ENCODE measurements at regions of chr2 and their contacts with region 1.

Region 1: GRCh38 chr2:37168217-37168981 is 11.6 kb upstream of the EIF2AK2 start:
- DNase-seq: peak; percentile 55
- ATAC-seq: peak; percentile 97
- H3K4me3 ChIP-seq: no peak overlapping the region
- H3K27ac ChIP-seq: no peak overlapping the region
- H3K4me1 ChIP-seq: 0 out of 2 replicates have a peak, but pooled peaks cover 2% of the 10 kb centered on the region
- H3K27me3 ChIP-seq: no peaks in the 10 kb centered on the region
- CTCF ChIP-seq: peak; percentile 70
- POLR2A ChIP-seq: no peak
- RAD21 ChIP-seq: peak; percentile 73

Region 2: DNA sequence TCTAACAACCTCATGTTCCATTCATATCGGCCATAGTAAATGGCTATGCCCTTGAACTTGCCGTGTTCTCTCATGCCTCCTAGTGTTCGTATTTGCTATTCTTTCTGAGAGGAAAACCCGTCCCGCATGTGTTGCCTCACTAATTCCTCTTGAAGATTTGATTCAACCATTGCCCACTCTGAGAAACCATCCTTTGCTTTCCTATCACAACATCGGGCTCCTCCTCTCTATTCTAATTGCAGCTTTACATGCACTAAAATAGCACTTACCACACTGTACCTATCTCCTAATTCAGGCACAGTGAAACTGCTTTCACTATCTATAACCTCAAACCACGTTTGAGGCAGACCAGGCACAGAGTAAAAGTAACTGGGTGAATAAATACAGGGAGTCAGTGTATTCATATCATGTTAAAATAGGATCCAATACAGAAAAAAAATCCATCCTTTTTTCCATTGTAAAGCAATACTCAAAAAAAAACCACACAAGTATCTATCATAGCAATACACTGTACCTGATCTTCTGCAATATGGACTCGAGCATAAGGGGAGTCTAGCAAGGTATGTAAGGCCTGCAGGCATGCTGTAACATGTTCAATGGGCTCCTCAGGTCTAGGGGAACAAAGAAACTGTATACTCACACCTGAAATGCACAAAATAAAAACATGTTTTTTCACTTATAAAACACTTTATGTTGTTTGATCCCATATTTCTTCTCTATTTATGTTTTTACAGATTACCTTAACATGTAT is 163.1 kb before region 1 on chr2:
- CTCF ChIA-PET with region 1: no interaction called
- POLR2A ChIA-PET with region 1: no interaction called
- dilution Hi-C with region 1: no loop called
- in situ Hi-C with region 1: no loop called
- intact Hi-C with region 1: no loop called
- DNase-seq: peak; percentile 23
- ATAC-seq: no peak
- H3K4me3 ChIP-seq: no peak overlapping the region
- H3K27ac ChIP-seq: no peak overlapping the region
- H3K4me1 ChIP-seq: peaks cover 2% of the 10 kb centered on the region; the same call in 1 of the 2 replicates
- H3K27me3 ChIP-seq: no peaks in the 10 kb centered on the region
- CTCF ChIP-seq: 0 out of 2 replicates have a peak, but pooled peaks have one; percentile 21
- POLR2A ChIP-seq: no peak
- RAD21 ChIP-seq: peak; percentile 36

Region 3: DNA sequence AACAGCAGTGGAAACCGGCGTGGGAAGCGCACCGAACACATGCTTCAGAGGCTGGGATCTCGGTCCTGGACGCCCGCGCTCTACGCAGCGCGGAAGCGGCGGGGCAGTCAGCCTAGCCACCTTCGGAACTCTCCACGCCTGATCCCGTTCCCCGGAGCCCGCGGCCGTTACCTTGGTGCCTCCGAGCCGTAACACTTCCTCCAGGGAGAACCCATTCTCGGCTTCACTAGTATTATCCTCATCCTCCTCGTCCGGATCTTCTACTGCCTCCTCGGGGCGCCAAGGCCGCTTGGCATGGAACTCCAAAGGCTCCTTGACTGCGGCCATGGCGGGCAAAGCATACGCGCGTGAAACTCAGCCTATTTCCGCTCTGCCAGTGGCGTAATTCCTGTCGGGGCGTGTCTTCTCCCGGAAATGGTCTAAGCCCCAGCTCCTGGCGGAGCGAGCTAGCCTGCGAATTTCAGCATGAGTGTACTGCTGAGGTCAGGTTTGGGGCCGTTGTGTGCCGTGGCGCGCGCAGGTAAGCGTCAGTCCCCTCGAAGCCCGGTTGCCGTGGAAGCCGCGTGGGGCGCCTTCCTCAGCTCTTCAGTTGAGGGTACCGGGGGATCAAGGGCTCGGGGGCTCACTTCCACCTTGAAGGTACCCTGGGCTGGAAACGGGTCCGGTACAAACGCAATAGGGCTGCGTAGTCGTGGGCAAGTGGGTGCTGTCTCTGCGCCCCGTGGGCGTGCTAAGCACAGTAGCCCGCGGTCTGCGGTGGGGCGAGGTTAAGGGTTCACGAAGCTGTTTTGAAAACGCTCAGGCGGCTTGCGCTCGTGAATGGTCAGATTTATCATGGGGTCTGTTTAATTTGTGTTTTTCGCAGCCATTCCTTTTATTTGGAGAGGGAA is 63.1 kb after region 1 on chr2 and contains the starts of genes CEBPZ and NDUFAF7:
- CTCF ChIA-PET with region 1: no interaction called
- POLR2A ChIA-PET with region 1: no interaction called
- dilution Hi-C with region 1: no loop called
- in situ Hi-C with region 1: no loop called
- intact Hi-C with region 1: loop called (anchors 1 kb)
- DNase-seq: peak; percentile 94
- ATAC-seq: peak; percentile 94
- H3K4me3 ChIP-seq: peak within 1 kb of the TSS; percentile 93
- H3K27ac ChIP-seq: peak within 1 kb of the TSS; percentile 89
- H3K4me1 ChIP-seq: peaks cover 6% of the 10 kb centered on the region
- H3K27me3 ChIP-seq: no peaks in the 10 kb centered on the region
- CTCF ChIP-seq: no peak
- POLR2A ChIP-seq: peak; percentile 78
- RAD21 ChIP-seq: no peak; the same call in 1 of the 2 replicates
- total RNA-seq, gene CEBPZ: 33.3 and 47.8 TPM in 2 replicates
- total RNA-seq, gene NDUFAF7: 9.9 and 12.8 TPM in 2 replicates

Region 4: GRCh38 chr2:37324786-37325624 is 156.6 kb after region 1 on chr2 and contains the start of gene PRKD3:
- CTCF ChIA-PET with region 1: no interaction called
- POLR2A ChIA-PET with region 1: no interaction called
- dilution Hi-C with region 1: no loop called
- in situ Hi-C with region 1: no loop called
- intact Hi-C with region 1: loop called (anchors 10 kb)
- DNase-seq: peak; percentile 39
- ATAC-seq: peak; percentile 89
- H3K4me3 ChIP-seq: peak within 1 kb of the TSS; percentile 75
- H3K27ac ChIP-seq: peak within 1 kb of the TSS; percentile 71
- H3K4me1 ChIP-seq: peaks cover 4% of the 10 kb centered on the region
- H3K27me3 ChIP-seq: no peaks in the 10 kb centered on the region
- CTCF ChIP-seq: no peak
- POLR2A ChIP-seq: no peak
- RAD21 ChIP-seq: no peak
- total RNA-seq, gene PRKD3: 46.4 and 47.5 TPM in 2 replicates

Region 5: GRCh38 chr2:37389989-37390765 is 221.8 kb after region 1 on chr2:
- CTCF ChIA-PET with region 1: no interaction called
- POLR2A ChIA-PET with region 1: no interaction called
- dilution Hi-C with region 1: no loop called
- in situ Hi-C with region 1: no loop called
- intact Hi-C with region 1: loop called (anchors 5 kb)
- DNase-seq: peak; percentile 96
- ATAC-seq: peak; percentile 60
- H3K4me3 ChIP-seq: no peak overlapping the region
- H3K27ac ChIP-seq: peak overlapping the region; percentile 26
- H3K4me1 ChIP-seq: peaks cover 27% of the 10 kb centered on the region
- H3K27me3 ChIP-seq: no peaks in the 10 kb centered on the region
- CTCF ChIP-seq: no peak
- POLR2A ChIP-seq: 0 out of 2 replicates have a peak, but pooled peaks have one; percentile 25
- RAD21 ChIP-seq: no peak

Region 6: DNA sequence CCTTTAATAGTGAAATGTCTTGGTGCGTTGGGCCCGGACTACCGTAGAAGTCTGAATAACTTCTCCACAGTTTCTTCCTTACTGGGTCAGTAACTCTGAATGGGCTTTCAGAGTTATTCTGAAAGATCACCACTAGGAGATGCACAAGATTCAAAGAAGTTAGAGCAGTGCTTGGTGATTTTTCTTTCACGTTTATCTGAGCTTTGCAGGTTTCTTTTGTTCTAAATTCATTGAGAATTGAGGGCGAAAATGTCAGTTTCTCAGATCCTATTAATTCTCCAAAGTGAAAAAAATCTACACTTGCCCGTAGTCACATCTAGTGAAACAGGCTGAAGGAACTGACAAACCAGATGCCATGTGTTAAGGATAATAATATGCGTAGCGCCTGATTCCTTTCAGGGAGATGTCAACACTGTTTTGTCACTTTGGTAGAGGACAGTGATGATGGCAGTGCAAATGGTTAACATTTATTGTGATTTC is 246.1 kb after region 1 on chr2:
- CTCF ChIA-PET with region 1: no interaction called
- POLR2A ChIA-PET with region 1: no interaction called
- dilution Hi-C with region 1: no loop called
- in situ Hi-C with region 1: no loop called
- intact Hi-C with region 1: no loop called
- DNase-seq: peak; percentile 81
- ATAC-seq: peak; percentile 84
- H3K4me3 ChIP-seq: no peak overlapping the region
- H3K27ac ChIP-seq: no peak overlapping the region
- H3K4me1 ChIP-seq: peaks cover 11% of the 10 kb centered on the region
- H3K27me3 ChIP-seq: no peaks in the 10 kb centered on the region
- CTCF ChIP-seq: peak; percentile 96
- POLR2A ChIP-seq: no peak
- RAD21 ChIP-seq: peak; percentile 97

Region 7: GRCh38 chr2:37890893-37891495 is 722.6 kb after region 1 on chr2:
- CTCF ChIA-PET with region 1: no interaction called
- POLR2A ChIA-PET with region 1: no interaction called
- dilution Hi-C with region 1: no loop called
- in situ Hi-C with region 1: loop called (anchors 25 kb)
- intact Hi-C with region 1: loop called (anchors 10 kb)
- DNase-seq: peak; percentile 62
- ATAC-seq: peak; percentile 91
- H3K4me3 ChIP-seq: no peak overlapping the region
- H3K27ac ChIP-seq: no peak overlapping the region
- H3K4me1 ChIP-seq: no peaks in the 10 kb centered on the region
- H3K27me3 ChIP-seq: 0 out of 2 replicates have a peak, but pooled peaks cover 4% of the 10 kb centered on the region
- CTCF ChIP-seq: peak; percentile 82
- POLR2A ChIP-seq: no peak
- RAD21 ChIP-seq: peak; percentile 82